Right cardiac atrium (tissue), 5 donors: ENCODE measurements at regions of chr11 and their contacts with region 1.

Region 1: DNA sequence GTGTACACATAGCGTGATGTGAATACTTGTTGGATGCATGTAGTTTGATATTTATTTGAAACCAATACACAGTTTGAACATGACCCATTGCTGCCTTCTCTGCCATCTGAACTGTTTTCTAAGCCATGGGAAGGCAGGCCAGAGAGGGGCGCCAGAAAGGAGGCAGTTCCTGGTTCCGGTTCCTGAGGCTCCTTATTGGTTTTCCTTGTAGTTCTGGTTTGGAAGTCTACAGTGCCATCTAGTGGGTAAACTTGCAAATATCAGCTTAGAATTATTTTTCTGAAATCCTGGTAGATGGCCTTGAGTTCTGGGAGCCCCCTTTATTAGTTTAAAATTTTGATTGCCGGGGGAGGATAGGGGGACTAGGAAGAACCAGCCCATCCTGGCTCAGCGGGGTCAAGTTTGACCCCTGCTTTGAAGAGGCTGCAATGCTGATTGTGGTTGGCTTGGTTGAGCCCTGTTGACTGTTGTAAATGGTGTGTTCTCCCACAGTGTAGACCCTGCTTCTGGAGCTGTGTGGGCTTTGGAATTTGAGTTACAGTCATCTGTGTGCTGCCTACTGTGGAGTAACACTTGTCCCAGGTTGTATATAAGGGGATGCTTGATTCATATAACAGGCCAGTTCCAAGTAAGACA is 48.4 kb downstream of the GRAMD1B start:
- DNase-seq: peak; percentile 60 to 77 (median 77)
- ATAC-seq: peak; percentile 66 to 71
- H3K4me3 ChIP-seq: no peak overlapping the region
- H3K27ac ChIP-seq: no peak overlapping the region
- H3K4me1 ChIP-seq: no peaks in the 10 kb centered on the region
- H3K27me3 ChIP-seq: no peaks in the 10 kb centered on the region

Region 2: GRCh38 chr11:123103326-123103980 is 375.0 kb before region 1 on chr11:
- intact Hi-C with region 1: loop called in 1 of 4 experiments (anchors 10 kb)
- DNase-seq: peak; percentile 63 to 83 (median 69)
- ATAC-seq: peak; percentile 90
- H3K4me3 ChIP-seq: no peak overlapping the region
- H3K27ac ChIP-seq: no peak overlapping the region
- H3K4me1 ChIP-seq: no peaks in the 10 kb centered on the region
- H3K27me3 ChIP-seq: no peaks in the 10 kb centered on the region

Region 3: DNA sequence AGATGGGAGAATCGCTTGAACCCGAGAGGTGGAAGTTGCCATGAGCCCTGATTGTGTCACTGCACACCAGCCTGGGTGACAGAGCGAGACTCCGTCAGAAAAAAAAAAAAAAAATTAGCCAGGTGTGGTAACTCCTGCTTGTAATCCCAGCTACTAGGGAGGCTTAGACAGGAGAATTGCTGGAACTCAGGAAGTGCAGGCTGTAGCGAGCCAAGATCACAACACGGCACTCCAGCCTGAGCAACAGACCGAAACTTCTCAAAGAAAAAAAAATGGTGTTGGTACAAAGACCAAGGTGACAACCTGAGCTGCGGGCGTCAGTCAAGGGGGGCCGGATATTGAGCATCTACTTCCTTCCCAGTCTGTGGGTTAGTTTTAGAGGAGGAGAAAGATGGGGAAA is 368.1 kb before region 1 on chr11:
- intact Hi-C with region 1: loop called in 2 of 4 experiments (anchors 10 kb)
- DNase-seq: no peak
- ATAC-seq: peak in 1 of 2 donors; percentile 35
- H3K4me3 ChIP-seq: no peak overlapping the region
- H3K27ac ChIP-seq: no peak overlapping the region
- H3K4me1 ChIP-seq: no peaks in the 10 kb centered on the region
- H3K27me3 ChIP-seq: no peaks in the 10 kb centered on the region

Region 4: GRCh38 chr11:123301696-123302400 is 176.6 kb before region 1 on chr11:
- intact Hi-C with region 1: loop called (anchors 2 to 5 kb)
- DNase-seq: peak; percentile 53 to 84 (median 82)
- ATAC-seq: peak; percentile 89 to 92
- H3K4me3 ChIP-seq: peak overlapping the region; percentile 26
- H3K27ac ChIP-seq: no peak overlapping the region
- H3K4me1 ChIP-seq: no peaks in the 10 kb centered on the region
- H3K27me3 ChIP-seq: no peaks in the 10 kb centered on the region

Region 5: DNA sequence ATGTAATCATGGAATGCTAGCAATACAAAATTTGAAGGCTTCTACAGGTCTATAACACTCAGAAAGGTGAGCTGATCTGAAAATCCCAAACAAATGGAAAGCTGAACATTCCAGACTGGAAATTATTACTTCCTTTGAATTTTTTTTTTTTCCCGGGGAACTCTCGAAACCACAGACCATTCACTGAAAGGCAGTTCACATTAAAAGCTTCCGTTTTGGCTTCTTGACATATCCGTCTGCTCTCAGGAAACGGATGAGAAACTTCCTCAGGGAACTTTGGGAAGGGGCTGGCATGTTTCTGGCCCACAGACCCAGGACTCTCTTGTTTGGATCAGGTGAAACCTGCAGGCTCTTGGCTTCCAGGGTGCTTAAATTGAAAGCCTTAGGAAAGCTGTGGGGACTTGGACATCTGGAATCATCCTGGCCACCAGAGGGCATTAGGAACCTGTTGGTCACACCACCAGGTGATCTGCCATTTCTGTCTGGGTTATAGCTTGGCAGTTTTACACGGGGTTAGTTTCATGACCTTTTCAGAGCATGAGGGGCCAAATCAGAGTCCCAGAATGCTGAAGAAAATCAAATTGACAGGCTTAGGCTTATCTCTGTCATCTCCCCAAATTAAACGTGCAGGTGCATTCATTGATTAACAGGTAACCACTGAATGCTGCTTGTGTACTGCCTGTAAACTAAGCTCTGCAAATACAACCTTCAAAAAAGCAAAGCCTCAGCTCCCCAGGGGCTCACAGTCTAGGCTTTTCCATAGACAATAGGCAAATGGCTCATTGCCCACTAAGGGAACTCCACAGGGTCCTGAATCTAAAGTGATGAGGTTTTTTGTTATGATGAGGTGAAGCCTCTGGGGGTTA is 71.1 kb before region 1 on chr11:
- intact Hi-C with region 1: loop called in 3 of 4 experiments (anchors 5 to 10 kb)
- DNase-seq: peak; percentile 49 to 67 (median 51)
- ATAC-seq: peak; percentile 61 to 68
- H3K4me3 ChIP-seq: no peak overlapping the region
- H3K27ac ChIP-seq: no peak overlapping the region
- H3K4me1 ChIP-seq: peaks cover 2% of the 10 kb centered on the region
- H3K27me3 ChIP-seq: no peaks in the 10 kb centered on the region

Region 6: DNA sequence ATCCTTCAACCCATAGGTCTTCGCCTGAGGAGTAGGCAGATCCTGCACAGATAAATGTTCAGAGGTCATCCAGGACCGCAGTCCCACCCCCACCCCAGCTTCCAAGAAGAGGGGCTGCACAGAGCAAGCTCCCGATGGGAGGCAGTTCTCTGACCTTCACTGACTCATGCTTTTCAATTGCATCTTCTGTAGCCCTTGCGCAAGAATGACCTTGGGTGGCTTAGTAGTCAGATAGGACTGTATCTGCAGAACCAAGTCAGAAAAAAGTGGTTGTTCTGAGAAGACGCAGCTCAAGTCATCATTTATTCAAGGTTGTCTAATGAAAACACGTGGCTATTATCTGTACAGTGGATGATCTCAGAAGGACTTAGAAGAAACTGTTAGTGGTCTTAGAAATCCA is 64.8 kb before region 1 on chr11:
- intact Hi-C with region 1: loop called in 3 of 4 experiments (anchors 5 to 10 kb)
- DNase-seq: no peak
- ATAC-seq: no peak
- H3K4me3 ChIP-seq: no peak overlapping the region
- H3K27ac ChIP-seq: no peak overlapping the region
- H3K4me1 ChIP-seq: no peaks in the 10 kb centered on the region
- H3K27me3 ChIP-seq: no peaks in the 10 kb centered on the region

Region 7: DNA sequence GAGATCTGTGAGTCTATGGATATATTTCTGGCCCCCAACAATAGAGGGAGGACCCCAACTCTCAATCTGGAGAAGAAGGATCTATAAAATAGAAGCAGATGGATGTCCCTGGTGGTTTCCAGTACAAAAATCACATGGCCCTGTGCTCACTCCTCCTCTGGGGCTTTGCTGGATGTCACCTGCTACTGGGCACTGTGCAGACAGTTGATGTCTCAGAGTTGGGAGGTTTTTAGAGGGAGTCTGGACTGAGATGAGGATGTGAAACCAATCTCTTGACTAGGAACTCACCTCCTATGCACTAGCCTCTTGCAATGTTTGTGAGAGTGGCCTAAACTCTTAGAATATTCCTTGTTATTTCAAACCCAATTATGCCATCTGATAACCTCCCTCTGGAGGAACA is 68.7 kb after region 1 on chr11:
- intact Hi-C with region 1: no loop called
- DNase-seq: no peak
- ATAC-seq: no peak
- H3K4me3 ChIP-seq: no peak overlapping the region
- H3K27ac ChIP-seq: no peak overlapping the region
- H3K4me1 ChIP-seq: no peaks in the 10 kb centered on the region
- H3K27me3 ChIP-seq: no peaks in the 10 kb centered on the region